ENCODE measurements at regions of chr12 and their contacts with region 1.

Region 1: DNA sequence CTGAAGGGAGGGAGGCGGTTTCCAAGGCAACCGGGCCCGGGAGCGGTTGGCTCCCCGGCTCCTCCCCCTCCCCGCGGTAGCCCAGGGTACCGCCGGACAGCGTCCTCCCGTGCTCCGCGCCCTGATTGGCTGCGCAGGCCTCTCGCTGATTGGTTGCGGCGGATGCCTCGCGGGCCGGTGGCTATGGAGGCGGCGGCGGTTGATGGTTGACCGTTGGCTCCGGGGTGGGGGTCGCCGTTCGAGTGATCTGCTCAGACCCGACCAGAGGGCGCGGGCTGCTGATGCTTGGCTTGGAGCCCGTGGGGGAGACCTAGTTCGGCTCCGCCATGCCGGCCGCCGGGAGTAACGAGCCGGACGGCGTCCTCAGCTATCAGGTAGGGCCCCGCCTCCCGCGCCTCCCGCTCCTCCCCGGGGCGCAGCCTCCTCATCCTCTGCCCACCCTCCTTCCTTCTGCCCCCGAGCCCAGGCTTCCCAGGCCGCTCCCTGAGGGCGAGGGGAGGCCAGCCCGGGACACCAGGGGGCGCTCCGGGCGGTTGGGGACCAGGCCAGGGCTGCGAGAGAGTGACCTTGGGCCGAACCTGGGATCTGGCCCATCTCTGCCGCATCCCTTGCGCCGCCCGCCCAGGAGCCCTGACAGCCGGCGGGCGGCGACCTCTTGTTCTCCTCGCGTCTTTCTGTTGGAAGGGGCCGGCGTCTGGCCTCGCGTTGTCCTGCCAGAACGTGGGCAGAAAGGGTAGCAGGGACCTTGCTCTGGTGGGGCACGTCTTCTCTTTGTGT is at the start of gene SLC4A8:
- DNase-seq: peak; percentile 37 to 89 (median 59)
- ATAC-seq: peak; percentile 81
- H3K4me3 ChIP-seq: peak within 1 kb of the TSS; percentile 74
- H3K4me3 Mint-ChIP-seq: peak within 1 kb of the TSS; percentile 84
- H3K27ac ChIP-seq: no peak within 1 kb of the TSS
- H3K27ac Mint-ChIP-seq: no peak within 1 kb of the TSS
- H3K4me1 ChIP-seq: peaks cover 18% of the 10 kb centered on the region
- H3K4me1 Mint-ChIP-seq: peaks cover 28% of the 10 kb centered on the region
- H3K27me3 ChIP-seq: no peaks in the 10 kb centered on the region
- H3K27me3 Mint-ChIP-seq: no peaks in the 10 kb centered on the region
- CTCF ChIP-seq: peak; percentile 75
- total RNA-seq, gene SLC4A8: 1.3 to 1.8 TPM

Region 2: GRCh38 chr12:50785406-50786000 is 639.3 kb before region 1 on chr12:
- CTCF ChIA-PET with region 1: no interaction called
- POLR2A ChIA-PET with region 1: no interaction called
- intact Hi-C with region 1: no loop called
- DNase-seq: no peak
- ATAC-seq: no peak
- H3K4me3 ChIP-seq: no peak overlapping the region
- H3K4me3 Mint-ChIP-seq: no peak overlapping the region
- H3K27ac ChIP-seq: no peak overlapping the region
- H3K27ac Mint-ChIP-seq: no peak overlapping the region
- H3K4me1 ChIP-seq: peaks cover 6% of the 10 kb centered on the region
- H3K4me1 Mint-ChIP-seq: peaks cover 11% of the 10 kb centered on the region
- H3K27me3 ChIP-seq: no peaks in the 10 kb centered on the region
- H3K27me3 Mint-ChIP-seq: no peaks in the 10 kb centered on the region
- CTCF ChIP-seq: no peak

Region 3: GRCh38 chr12:50901685-50902113 is 523.2 kb before region 1 on chr12:
- CTCF ChIA-PET with region 1: no interaction called
- POLR2A ChIA-PET with region 1: no interaction called
- intact Hi-C with region 1: no loop called
- DNase-seq: no peak
- ATAC-seq: no peak
- H3K4me3 ChIP-seq: no peak overlapping the region
- H3K4me3 Mint-ChIP-seq: no peak overlapping the region
- H3K27ac ChIP-seq: no peak overlapping the region
- H3K27ac Mint-ChIP-seq: no peak overlapping the region
- H3K4me1 ChIP-seq: no peaks in the 10 kb centered on the region
- H3K4me1 Mint-ChIP-seq: no peaks in the 10 kb centered on the region
- H3K27me3 ChIP-seq: no peaks in the 10 kb centered on the region
- H3K27me3 Mint-ChIP-seq: no peaks in the 10 kb centered on the region
- CTCF ChIP-seq: no peak

Region 4: GRCh38 chr12:51368640-51369517 is 56.0 kb before region 1 on chr12:
- CTCF ChIA-PET with region 1: no interaction called
- POLR2A ChIA-PET with region 1: interaction called, 5 read pairs
- intact Hi-C with region 1: loop called in 1 of 2 experiments (anchors 2 kb)
- DNase-seq: peak; percentile 74 to 98 (median 84)
- ATAC-seq: peak; percentile 94
- H3K4me3 ChIP-seq: peak overlapping the region; percentile 42
- H3K4me3 Mint-ChIP-seq: peak overlapping the region; percentile 66
- H3K27ac ChIP-seq: peak overlapping the region in 1 of 2 donors; percentile 59
- H3K27ac Mint-ChIP-seq: peak overlapping the region; percentile 89
- H3K4me1 ChIP-seq: peaks cover 45% of the 10 kb centered on the region
- H3K4me1 Mint-ChIP-seq: peaks cover 67% of the 10 kb centered on the region
- H3K27me3 ChIP-seq: no peaks in the 10 kb centered on the region
- H3K27me3 Mint-ChIP-seq: no peaks in the 10 kb centered on the region
- CTCF ChIP-seq: no peak

Region 5: DNA sequence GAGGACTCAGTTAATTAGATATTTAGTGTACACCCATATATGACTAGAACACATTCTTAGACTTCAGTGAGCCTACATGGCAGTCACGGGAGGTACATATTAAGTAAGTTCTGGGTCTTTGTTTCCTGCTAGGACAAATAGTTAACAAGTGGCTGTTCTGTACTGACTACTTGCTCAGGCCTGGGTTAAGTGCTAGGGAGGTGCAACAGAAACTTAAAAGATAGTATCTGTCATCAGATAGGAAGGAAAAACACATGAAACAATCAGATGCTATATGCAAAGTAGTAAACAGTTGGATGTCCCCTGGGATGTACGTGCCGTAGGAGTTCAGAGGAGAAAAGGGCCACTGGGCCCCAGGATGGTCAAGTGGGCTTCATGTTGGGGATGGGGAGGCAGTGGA is 59.3 kb after region 1 on chr12:
- CTCF ChIA-PET with region 1: no interaction called
- POLR2A ChIA-PET with region 1: no interaction called
- intact Hi-C with region 1: no loop called
- DNase-seq: peak in 1 of 14 experiments; percentile 6
- ATAC-seq: no peak
- H3K4me3 ChIP-seq: no peak overlapping the region
- H3K4me3 Mint-ChIP-seq: peak overlapping the region; percentile 26
- H3K27ac ChIP-seq: peak overlapping the region in 1 of 2 donors; percentile 25
- H3K27ac Mint-ChIP-seq: peak overlapping the region; percentile 80
- H3K4me1 ChIP-seq: peaks cover 25% of the 10 kb centered on the region
- H3K4me1 Mint-ChIP-seq: peaks cover 43% of the 10 kb centered on the region
- H3K27me3 ChIP-seq: no peaks in the 10 kb centered on the region
- H3K27me3 Mint-ChIP-seq: no peaks in the 10 kb centered on the region
- CTCF ChIP-seq: no peak

Region 6: GRCh38 chr12:51678086-51678724 is 253.4 kb after region 1 on chr12:
- CTCF ChIA-PET with region 1: no interaction called
- POLR2A ChIA-PET with region 1: no interaction called
- intact Hi-C with region 1: loop called in 1 of 2 experiments (anchors 10 kb)
- DNase-seq: peak in 5 of 14 experiments; percentile 9 to 52 (median 35)
- ATAC-seq: peak; percentile 68
- H3K4me3 ChIP-seq: no peak overlapping the region
- H3K4me3 Mint-ChIP-seq: no peak overlapping the region
- H3K27ac ChIP-seq: no peak overlapping the region
- H3K27ac Mint-ChIP-seq: no peak overlapping the region
- H3K4me1 ChIP-seq: no peaks in the 10 kb centered on the region
- H3K4me1 Mint-ChIP-seq: no peaks in the 10 kb centered on the region
- H3K27me3 ChIP-seq: no peaks in the 10 kb centered on the region
- H3K27me3 Mint-ChIP-seq: peaks cover 8% of the 10 kb centered on the region
- CTCF ChIP-seq: peak; percentile 50

Region 7: DNA sequence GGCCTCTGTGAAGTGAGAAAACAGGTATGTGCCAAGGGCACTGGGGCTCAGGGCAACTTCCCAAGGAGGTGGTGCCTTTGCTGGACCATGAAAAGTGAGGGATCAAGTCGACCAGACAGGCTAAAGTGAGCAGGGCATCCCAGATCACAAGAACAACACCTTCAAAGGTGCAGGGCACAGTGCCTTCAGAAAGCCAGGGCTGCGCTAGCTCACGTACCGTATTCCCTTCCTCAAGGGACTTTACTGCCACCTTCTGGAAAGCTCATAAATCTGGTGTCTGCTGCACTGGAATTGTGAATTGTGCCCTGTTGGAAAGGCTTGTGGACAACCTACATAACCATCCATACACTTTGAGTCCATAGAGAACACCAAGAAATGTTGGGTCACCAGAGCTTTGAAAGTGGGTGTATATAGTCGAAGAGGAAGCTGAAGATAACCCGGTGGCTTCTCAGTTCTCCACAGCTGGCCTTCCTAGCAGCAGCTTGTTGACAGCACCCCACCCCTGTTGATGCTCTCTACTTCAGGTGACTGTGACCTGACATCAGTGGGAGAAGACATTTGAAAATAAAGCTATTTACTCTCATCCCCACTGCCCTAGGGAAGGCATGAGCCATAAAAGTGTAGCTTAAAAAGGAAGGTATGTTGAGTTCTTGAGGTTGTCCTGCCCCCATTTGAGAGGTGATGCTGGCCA is 399.2 kb after region 1 on chr12:
- CTCF ChIA-PET with region 1: interaction called, 3 read pairs
- POLR2A ChIA-PET with region 1: no interaction called
- intact Hi-C with region 1: loop called (anchors 2 kb)
- DNase-seq: peak in 5 of 14 experiments; percentile 8 to 76 (median 56)
- ATAC-seq: no peak
- H3K4me3 ChIP-seq: no peak overlapping the region
- H3K4me3 Mint-ChIP-seq: peak overlapping the region; percentile 85
- H3K27ac ChIP-seq: no peak overlapping the region
- H3K27ac Mint-ChIP-seq: peak overlapping the region; percentile 66
- H3K4me1 ChIP-seq: peaks cover 45% of the 10 kb centered on the region
- H3K4me1 Mint-ChIP-seq: peaks cover 38% of the 10 kb centered on the region
- H3K27me3 ChIP-seq: no peaks in the 10 kb centered on the region
- H3K27me3 Mint-ChIP-seq: peaks cover 4% of the 10 kb centered on the region
- CTCF ChIP-seq: peak; percentile 43

Region 8: GRCh38 chr12:51879102-51879501 is 454.3 kb after region 1 on chr12:
- CTCF ChIA-PET with region 1: no interaction called
- POLR2A ChIA-PET with region 1: no interaction called
- intact Hi-C with region 1: loop called (anchors 1 to 5 kb)
- DNase-seq: no peak
- ATAC-seq: no peak
- H3K4me3 ChIP-seq: no peak overlapping the region
- H3K4me3 Mint-ChIP-seq: no peak overlapping the region
- H3K27ac ChIP-seq: no peak overlapping the region
- H3K27ac Mint-ChIP-seq: no peak overlapping the region
- H3K4me1 ChIP-seq: no peaks in the 10 kb centered on the region
- H3K4me1 Mint-ChIP-seq: no peaks in the 10 kb centered on the region
- H3K27me3 ChIP-seq: no peaks in the 10 kb centered on the region
- H3K27me3 Mint-ChIP-seq: no peaks in the 10 kb centered on the region
- CTCF ChIP-seq: no peak